MCF 10A (cell line): ENCODE measurements at regions of chr12 and their contacts with region 1.

Region 1: DNA sequence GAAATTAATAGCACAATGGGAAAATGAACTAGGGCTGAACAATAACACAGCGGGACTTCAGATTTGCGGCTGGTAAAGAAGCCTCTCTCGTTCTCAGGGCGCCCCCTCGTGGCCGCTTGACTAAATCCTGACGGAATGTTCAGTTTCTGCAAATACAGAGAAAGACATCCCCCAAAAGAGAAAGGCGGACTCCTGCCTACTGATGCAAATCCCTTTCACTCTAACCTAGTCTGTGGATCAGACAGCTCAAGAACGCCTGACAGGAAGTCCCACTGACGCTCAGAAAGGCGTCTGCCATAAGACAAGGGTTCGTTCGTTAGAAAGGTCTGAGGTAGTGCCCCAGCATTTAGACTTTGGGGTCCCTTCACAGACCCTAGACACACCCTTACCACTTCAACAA is 2.5 kb downstream of the NUAK1 start:
- DNase-seq: peak; percentile 86
- H3K4me3 Mint-ChIP-seq: peak overlapping the region; percentile 69
- H3K27ac Mint-ChIP-seq: no peak overlapping the region
- H3K4me1 Mint-ChIP-seq: peaks cover 64% of the 10 kb centered on the region
- H3K27me3 Mint-ChIP-seq: no peaks in the 10 kb centered on the region
- CTCF ChIP-seq: peak; percentile 74

Region 2: DNA sequence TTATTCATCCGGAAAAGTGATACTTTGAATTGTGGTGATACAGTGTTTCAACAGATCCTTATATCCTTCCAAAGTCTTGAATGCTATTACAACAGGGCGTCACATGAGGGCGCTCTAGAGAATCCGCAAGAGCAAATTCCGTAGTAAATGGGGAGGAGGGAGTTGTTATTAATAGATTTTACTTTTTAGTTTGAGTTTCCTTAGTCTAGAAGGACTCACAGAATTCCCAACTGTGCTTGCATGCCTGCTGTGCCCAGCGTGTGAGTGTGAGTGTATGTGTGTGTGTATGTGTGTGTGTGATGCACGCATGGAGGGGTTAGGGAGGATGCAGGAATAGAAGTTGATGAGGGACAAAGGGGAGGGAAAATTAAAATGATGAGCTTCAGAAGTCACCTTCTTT is 430.5 kb before region 1 on chr12:
- CTCF ChIA-PET with region 1: interaction called, 54 read pairs
- POLR2A ChIA-PET with region 1: no interaction called
- intact Hi-C with region 1: loop called (anchors 1 kb)
- DNase-seq: peak; percentile 56
- H3K4me3 Mint-ChIP-seq: no peak overlapping the region
- H3K27ac Mint-ChIP-seq: peak overlapping the region; percentile 73
- H3K4me1 Mint-ChIP-seq: peaks cover 6% of the 10 kb centered on the region
- H3K27me3 Mint-ChIP-seq: no peaks in the 10 kb centered on the region
- CTCF ChIP-seq: peak; percentile 74

Region 3: GRCh38 chr12:105775343-105775742 is 360.9 kb before region 1 on chr12:
- CTCF ChIA-PET with region 1: interaction called, 11 read pairs
- POLR2A ChIA-PET with region 1: no interaction called
- intact Hi-C with region 1: no loop called
- DNase-seq: no peak
- H3K4me3 Mint-ChIP-seq: no peak overlapping the region
- H3K27ac Mint-ChIP-seq: no peak overlapping the region
- H3K4me1 Mint-ChIP-seq: no peaks in the 10 kb centered on the region
- H3K27me3 Mint-ChIP-seq: no peaks in the 10 kb centered on the region
- CTCF ChIP-seq: no peak

Region 4: DNA sequence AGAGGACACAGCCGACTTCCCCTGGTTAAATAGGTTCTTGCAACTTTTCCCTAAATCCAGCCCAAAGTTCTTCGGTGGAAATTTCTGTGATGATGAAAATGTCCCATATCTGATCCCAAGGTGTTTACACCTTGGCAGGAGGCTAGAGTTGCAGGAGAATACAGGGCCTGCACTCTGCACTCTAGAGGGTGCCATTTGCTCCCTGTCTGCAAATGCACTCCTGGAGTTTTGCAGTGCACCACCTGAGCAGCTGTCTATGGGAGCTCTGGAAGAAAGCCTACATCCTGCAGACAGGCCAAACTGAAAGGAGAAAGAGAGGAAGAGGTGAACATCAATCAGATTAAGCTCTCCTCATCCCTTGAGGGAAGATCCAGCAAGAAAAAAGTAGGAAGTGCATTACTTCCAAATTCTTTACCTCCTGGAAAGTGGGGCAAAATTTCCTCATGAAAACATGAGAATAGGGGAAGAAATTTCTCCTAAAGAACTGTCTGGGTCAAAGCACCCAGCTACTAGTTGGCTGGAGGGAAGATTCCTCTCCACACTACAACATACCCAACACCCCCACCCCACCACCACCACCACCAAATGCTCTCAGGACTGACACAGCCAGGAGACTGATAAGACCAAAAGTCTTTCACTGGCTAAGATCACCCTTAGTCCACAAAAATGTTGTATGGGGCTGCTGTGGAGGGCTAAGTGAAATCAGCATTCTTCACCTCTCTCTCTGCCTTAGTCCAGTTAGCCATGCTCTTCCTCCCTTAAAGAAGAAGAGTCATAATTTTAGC is 103.9 kb before region 1 on chr12:
- CTCF ChIA-PET with region 1: interaction called, 6 read pairs
- POLR2A ChIA-PET with region 1: no interaction called
- intact Hi-C with region 1: loop called (anchors 1 kb)
- DNase-seq: peak; percentile 44
- H3K4me3 Mint-ChIP-seq: no peak overlapping the region
- H3K27ac Mint-ChIP-seq: no peak overlapping the region
- H3K4me1 Mint-ChIP-seq: peaks cover 6% of the 10 kb centered on the region
- H3K27me3 Mint-ChIP-seq: no peaks in the 10 kb centered on the region
- CTCF ChIP-seq: no peak

Region 5: GRCh38 chr12:106108185-106108835 is 28.0 kb before region 1 on chr12:
- CTCF ChIA-PET with region 1: interaction called, 115 read pairs
- POLR2A ChIA-PET with region 1: interaction called, 59 read pairs
- intact Hi-C with region 1: loop called (anchors 2 kb)
- DNase-seq: peak; percentile 36
- H3K4me3 Mint-ChIP-seq: peak overlapping the region; percentile 2
- H3K27ac Mint-ChIP-seq: peak overlapping the region; percentile 71
- H3K4me1 Mint-ChIP-seq: peaks cover 46% of the 10 kb centered on the region
- H3K27me3 Mint-ChIP-seq: no peaks in the 10 kb centered on the region
- CTCF ChIP-seq: no peak

Region 6: DNA sequence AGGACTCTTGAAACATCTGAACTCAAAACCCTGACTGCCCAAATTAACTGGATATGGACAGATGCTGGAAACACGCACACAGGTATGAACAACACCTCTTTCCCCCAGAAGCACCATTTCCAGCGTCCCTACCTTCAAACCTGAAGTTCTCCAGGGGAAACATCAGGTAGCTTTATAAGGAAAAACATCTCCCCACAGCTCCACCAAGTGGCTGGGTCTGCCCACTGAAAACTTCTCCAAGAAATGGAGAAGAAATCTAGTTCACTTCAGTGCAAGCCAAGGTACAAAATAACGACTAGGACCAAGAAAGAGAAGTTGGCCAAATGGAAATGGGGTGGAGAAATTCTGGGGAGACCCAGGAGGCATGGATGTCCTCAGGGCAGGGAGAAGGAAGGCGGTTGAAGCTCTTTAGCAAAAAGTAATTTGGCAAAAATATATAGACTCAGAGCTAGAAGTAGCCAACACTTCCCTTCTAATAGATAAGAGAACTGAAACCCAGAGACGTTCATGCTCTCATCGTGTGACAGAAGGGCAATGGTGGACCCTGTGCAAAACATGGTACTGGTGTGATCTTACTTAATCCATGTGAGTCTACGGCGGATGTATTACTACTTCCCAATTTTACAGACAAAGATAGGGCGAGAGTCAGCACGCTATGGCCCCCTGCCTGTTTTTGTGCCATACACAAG is 13.0 kb after region 1 on chr12:
- CTCF ChIA-PET with region 1: interaction called, 46 read pairs
- POLR2A ChIA-PET with region 1: interaction called, 6 read pairs
- intact Hi-C with region 1: no loop called
- DNase-seq: peak; percentile 57
- H3K4me3 Mint-ChIP-seq: no peak overlapping the region
- H3K27ac Mint-ChIP-seq: no peak overlapping the region
- H3K4me1 Mint-ChIP-seq: no peaks in the 10 kb centered on the region
- H3K27me3 Mint-ChIP-seq: no peaks in the 10 kb centered on the region
- CTCF ChIP-seq: peak; percentile 60

Region 7: GRCh38 chr12:106205208-106206071 is 69.2 kb after region 1 on chr12:
- CTCF ChIA-PET with region 1: interaction called, 4 read pairs
- POLR2A ChIA-PET with region 1: interaction called, 4 read pairs
- intact Hi-C with region 1: loop called (anchors 2 kb)
- DNase-seq: peak; percentile 43
- H3K4me3 Mint-ChIP-seq: no peak overlapping the region
- H3K27ac Mint-ChIP-seq: peak overlapping the region; percentile 7
- H3K4me1 Mint-ChIP-seq: peaks cover 5% of the 10 kb centered on the region
- H3K27me3 Mint-ChIP-seq: peaks cover 24% of the 10 kb centered on the region
- CTCF ChIP-seq: peak; percentile 38